ENCODE measurements at regions of chr4 and their contacts with region 1.

Region 1: DNA sequence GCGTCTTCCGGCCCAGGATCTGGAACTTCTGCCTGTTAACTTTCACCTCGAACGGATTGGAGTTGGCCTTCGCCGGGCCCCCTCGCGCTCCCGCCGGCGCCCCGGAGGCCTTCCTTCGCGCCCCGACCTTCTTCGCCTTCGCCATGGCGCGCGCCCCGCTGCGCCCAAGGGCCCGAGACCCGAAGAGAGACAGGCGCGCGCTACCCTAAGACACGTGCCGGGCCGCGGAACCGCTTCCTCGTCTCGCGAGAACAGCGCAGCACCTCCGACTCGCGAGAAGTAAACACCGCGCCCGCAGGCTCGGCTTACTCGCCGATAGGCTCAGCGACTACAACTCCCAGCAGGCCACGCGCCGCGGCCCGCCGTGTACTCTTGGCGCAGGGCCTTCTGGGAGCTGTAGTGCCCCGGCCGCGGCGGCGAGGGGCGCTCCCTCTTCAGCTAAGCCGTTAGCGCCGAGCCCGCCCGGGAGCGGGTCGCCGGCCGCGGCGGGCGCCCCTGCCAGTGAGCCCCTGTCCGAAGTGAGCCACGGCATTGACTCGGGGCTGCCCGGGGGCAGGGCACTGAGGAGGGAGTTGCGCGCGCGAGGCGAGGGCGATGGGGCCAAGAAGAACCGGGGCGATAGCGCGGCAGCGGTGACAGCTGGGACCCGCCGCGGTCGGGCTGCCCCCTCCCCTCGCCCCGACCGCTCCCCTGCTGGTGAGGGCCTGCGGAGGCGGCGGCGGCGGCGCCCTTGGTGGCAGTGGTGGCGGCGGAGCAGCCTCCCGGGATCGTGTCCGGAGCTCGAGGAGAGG is at the starts of genes GRK4 and NOP14:
- DNase-seq: peak; percentile 92 to 99 (median 97)
- ATAC-seq: peak; percentile 87
- H3K4me3 ChIP-seq: peak within 1 kb of the TSS; percentile 82 to 86
- H3K4me3 Mint-ChIP-seq: peak within 1 kb of the TSS; percentile 78
- H3K27ac ChIP-seq: peak within 1 kb of the TSS; percentile 74 to 88
- H3K27ac Mint-ChIP-seq: peak within 1 kb of the TSS; percentile 94
- H3K4me1 ChIP-seq: peaks cover 23% of the 10 kb centered on the region
- H3K4me1 Mint-ChIP-seq: peaks cover 43% of the 10 kb centered on the region
- H3K27me3 ChIP-seq: no peaks in the 10 kb centered on the region
- H3K27me3 Mint-ChIP-seq: no peaks in the 10 kb centered on the region
- CTCF ChIP-seq: peak; percentile 45
- total RNA-seq, gene GRK4: 1.2 to 1.3 TPM
- total RNA-seq, gene NOP14: 23.5 to 23.9 TPM

Region 2: DNA sequence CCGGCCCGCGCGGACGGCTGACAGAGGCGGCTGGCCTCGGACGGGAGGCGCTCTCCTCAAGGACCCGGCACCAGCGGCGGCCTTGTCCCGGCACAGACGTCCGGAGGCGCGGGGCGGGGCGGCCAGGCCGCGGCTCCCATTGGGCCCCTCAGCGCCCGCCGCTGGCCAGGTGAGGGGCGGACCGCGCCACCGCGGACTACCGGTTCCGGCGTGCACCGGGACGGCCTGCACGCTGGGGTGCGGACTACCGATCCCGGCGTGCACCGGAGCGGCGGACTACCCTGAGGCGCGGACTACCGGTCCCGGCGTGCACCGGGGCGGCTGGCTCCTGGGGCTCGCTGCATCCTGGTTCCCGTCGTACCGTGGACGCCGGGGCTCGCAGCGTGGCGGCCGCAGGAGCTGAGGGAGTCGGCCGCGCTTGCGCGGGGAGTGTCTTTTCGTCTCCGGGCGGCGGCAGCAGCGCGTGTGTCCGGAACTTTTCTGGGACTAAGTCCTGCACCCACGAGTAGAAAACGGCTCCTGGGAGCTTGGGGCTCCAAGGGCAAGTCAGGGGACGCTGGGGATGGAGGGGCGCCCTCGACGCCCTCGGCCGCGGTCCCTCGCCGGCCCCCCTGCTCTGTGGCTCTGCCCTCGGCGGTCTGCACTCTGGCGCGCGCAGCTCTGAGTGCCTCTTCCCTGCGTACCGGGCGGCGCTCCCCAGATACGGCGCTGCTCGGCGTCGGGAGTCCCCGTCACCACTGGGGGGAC is 1107.2 kb before region 1 on chr4 and contains the start of gene LETM1:
- CTCF ChIA-PET with region 1: no interaction called
- POLR2A ChIA-PET with region 1: no interaction called
- intact Hi-C with region 1: loop called (anchors 5 kb)
- DNase-seq: peak; percentile 73 to 96 (median 92)
- ATAC-seq: peak; percentile 96
- H3K4me3 ChIP-seq: peak within 1 kb of the TSS; percentile 83 to 91
- H3K4me3 Mint-ChIP-seq: peak within 1 kb of the TSS; percentile 80
- H3K27ac ChIP-seq: peak within 1 kb of the TSS; percentile 47 to 50
- H3K27ac Mint-ChIP-seq: peak within 1 kb of the TSS; percentile 45
- H3K4me1 ChIP-seq: peaks cover 19% of the 10 kb centered on the region
- H3K4me1 Mint-ChIP-seq: peaks cover 44% of the 10 kb centered on the region
- H3K27me3 ChIP-seq: no peaks in the 10 kb centered on the region
- H3K27me3 Mint-ChIP-seq: no peaks in the 10 kb centered on the region
- CTCF ChIP-seq: no peak
- total RNA-seq, gene LETM1: 22.7 to 25.9 TPM

Region 3: DNA sequence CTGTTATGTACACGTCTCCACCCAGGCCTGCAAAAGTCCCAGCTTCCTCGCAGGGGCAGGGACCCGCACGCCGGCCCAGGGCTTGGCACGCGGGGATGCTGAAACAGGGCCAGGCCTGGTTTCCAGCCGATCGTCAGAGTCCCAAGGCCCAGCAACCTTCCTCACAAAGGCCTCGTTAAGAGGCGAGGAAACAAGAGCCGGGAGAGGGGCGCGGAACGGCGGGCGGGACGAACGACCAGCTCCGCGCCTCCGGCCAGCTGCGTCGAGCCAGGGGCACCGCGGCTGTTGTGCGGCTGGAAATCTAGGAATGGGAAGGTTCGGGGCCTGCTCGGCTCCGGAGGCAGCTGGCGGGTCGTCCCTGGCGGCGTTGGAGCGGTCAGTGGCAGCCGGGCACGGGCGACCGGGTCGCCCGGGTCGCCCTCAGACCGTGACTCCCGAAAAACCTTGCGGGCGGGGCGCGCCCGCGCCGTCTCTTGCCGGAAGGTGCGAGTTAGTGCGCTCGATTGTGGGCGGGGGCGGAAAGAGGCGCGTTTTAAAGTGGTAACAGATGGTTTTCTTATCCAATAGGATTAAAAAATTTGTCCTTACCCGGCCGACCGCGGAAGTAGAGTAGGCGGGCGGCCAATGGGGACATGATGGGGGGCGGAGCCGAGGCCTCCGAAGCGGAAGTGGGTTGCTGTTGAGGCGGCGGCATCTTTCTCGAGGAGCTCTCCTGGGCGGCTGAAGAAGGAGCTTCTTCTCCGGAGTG is 494.8 kb before region 1 on chr4 and contains the start of gene RNF4:
- CTCF ChIA-PET with region 1: no interaction called
- POLR2A ChIA-PET with region 1: no interaction called
- intact Hi-C with region 1: loop called in 1 of 2 experiments (anchors 5 kb)
- DNase-seq: peak; percentile 90 to 98 (median 94)
- ATAC-seq: peak; percentile 82
- H3K4me3 ChIP-seq: peak within 1 kb of the TSS; percentile 54 to 91
- H3K4me3 Mint-ChIP-seq: peak within 1 kb of the TSS; percentile 96
- H3K27ac ChIP-seq: peak within 1 kb of the TSS; percentile 95 to 97
- H3K27ac Mint-ChIP-seq: peak within 1 kb of the TSS; percentile 98
- H3K4me1 ChIP-seq: peaks cover 42% of the 10 kb centered on the region
- H3K4me1 Mint-ChIP-seq: peaks cover 45% of the 10 kb centered on the region
- H3K27me3 ChIP-seq: no peaks in the 10 kb centered on the region
- H3K27me3 Mint-ChIP-seq: no peaks in the 10 kb centered on the region
- CTCF ChIP-seq: no peak
- total RNA-seq, gene RNF4: 130 to 134 TPM

Region 4: DNA sequence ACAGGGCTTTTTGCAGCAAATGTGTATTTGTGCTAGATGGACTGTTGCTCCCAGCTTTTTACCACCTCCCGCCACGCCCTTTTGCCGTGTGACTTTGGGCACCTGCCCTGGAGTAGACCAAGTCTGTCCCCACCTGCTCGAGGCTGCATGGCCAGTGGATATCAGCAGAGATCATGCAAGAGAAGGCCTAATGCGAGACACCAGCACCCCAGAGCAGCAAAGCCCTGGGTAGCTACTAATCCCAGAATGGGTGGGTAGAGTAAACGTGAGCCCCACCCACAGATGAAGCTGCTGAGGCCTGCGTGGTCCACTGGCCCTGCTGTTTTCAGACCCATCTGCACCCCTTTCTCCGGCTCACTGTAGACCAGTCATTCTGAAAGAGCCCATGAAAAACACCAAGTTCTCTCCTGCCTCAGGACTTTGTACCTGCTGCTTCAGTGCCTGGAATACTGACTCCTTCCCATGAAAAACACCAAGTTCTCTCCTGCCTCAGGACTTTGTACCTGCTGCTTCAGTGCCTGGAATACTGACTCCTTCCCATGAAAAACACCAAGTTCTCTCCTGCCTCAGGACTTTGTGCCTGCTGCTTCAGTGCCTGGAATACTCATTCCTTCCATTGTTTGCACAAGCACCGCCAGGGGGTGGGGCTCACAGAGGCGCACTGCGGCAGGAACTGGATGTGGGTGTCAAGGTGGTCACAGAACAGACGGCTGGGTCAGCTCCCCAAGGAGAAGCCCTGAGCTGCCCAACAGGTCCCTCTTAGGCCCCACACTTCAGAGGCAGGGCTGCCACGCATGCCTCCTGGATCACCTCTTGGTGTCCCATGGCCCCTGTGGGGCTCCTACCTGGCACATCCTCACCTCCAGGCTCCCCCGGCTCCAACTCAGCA is 202.1 kb before region 1 on chr4:
- CTCF ChIA-PET with region 1: interaction called, 3 read pairs
- POLR2A ChIA-PET with region 1: interaction called, 5 read pairs
- intact Hi-C with region 1: loop called (anchors 1 to 2 kb)
- DNase-seq: no peak
- ATAC-seq: no peak
- H3K4me3 ChIP-seq: no peak overlapping the region
- H3K4me3 Mint-ChIP-seq: no peak overlapping the region
- H3K27ac ChIP-seq: no peak overlapping the region
- H3K27ac Mint-ChIP-seq: no peak overlapping the region
- H3K4me1 ChIP-seq: peaks cover 15% of the 10 kb centered on the region
- H3K4me1 Mint-ChIP-seq: peaks cover 15% of the 10 kb centered on the region
- H3K27me3 ChIP-seq: no peaks in the 10 kb centered on the region
- H3K27me3 Mint-ChIP-seq: no peaks in the 10 kb centered on the region
- CTCF ChIP-seq: no peak

Region 5: GRCh38 chr4:2898001-2898400 is 65.4 kb before region 1 on chr4:
- CTCF ChIA-PET with region 1: no interaction called
- POLR2A ChIA-PET with region 1: no interaction called
- intact Hi-C with region 1: no loop called
- DNase-seq: no peak
- ATAC-seq: no peak
- H3K4me3 ChIP-seq: no peak overlapping the region
- H3K4me3 Mint-ChIP-seq: no peak overlapping the region
- H3K27ac ChIP-seq: no peak overlapping the region
- H3K27ac Mint-ChIP-seq: no peak overlapping the region
- H3K4me1 ChIP-seq: no peaks in the 10 kb centered on the region
- H3K4me1 Mint-ChIP-seq: no peaks in the 10 kb centered on the region
- H3K27me3 ChIP-seq: no peaks in the 10 kb centered on the region
- H3K27me3 Mint-ChIP-seq: no peaks in the 10 kb centered on the region
- CTCF ChIP-seq: no peak

Region 6: GRCh38 chr4:3037957-3038461 is 74.6 kb after region 1 on chr4:
- CTCF ChIA-PET with region 1: interaction called, 6 read pairs
- POLR2A ChIA-PET with region 1: no interaction called
- intact Hi-C with region 1: loop called in 1 of 2 experiments (anchors 5 kb)
- DNase-seq: peak in 1 of 9 experiments; percentile 31
- ATAC-seq: no peak
- H3K4me3 ChIP-seq: peak overlapping the region in 1 of 2 experiments; percentile 42
- H3K4me3 Mint-ChIP-seq: peak overlapping the region; percentile 68
- H3K27ac ChIP-seq: no peak overlapping the region
- H3K27ac Mint-ChIP-seq: peak overlapping the region; percentile 4
- H3K4me1 ChIP-seq: peaks cover 30% of the 10 kb centered on the region
- H3K4me1 Mint-ChIP-seq: peaks cover 31% of the 10 kb centered on the region
- H3K27me3 ChIP-seq: peaks cover 0 to 2% of the 10 kb centered on the region in 2 experiments
- H3K27me3 Mint-ChIP-seq: peaks cover 7% of the 10 kb centered on the region
- CTCF ChIP-seq: no peak

Region 7: GRCh38 chr4:3292571-3293400 is 329.4 kb after region 1 on chr4 and contains the start of gene RGS12:
- CTCF ChIA-PET with region 1: no interaction called
- POLR2A ChIA-PET with region 1: no interaction called
- intact Hi-C with region 1: loop called in 1 of 2 experiments (anchors 1 kb)
- DNase-seq: peak; percentile 58 to 89 (median 78)
- ATAC-seq: peak; percentile 82
- H3K4me3 ChIP-seq: peak within 1 kb of the TSS; percentile 67 to 79
- H3K4me3 Mint-ChIP-seq: peak within 1 kb of the TSS; percentile 89
- H3K27ac ChIP-seq: no peak within 1 kb of the TSS
- H3K27ac Mint-ChIP-seq: peak within 1 kb of the TSS; percentile 82
- H3K4me1 ChIP-seq: peaks cover 14% of the 10 kb centered on the region
- H3K4me1 Mint-ChIP-seq: peaks cover 18% of the 10 kb centered on the region
- H3K27me3 ChIP-seq: peaks cover 0 to 4% of the 10 kb centered on the region in 2 experiments
- H3K27me3 Mint-ChIP-seq: peaks cover 20% of the 10 kb centered on the region
- CTCF ChIP-seq: no peak
- total RNA-seq, gene RGS12: 4.4 to 7.6 TPM

Measured in CD8-positive, alpha-beta T cell (primary cell).